ENCODE measurements at regions of chr11 and their contacts with region 1.

Region 1: DNA sequence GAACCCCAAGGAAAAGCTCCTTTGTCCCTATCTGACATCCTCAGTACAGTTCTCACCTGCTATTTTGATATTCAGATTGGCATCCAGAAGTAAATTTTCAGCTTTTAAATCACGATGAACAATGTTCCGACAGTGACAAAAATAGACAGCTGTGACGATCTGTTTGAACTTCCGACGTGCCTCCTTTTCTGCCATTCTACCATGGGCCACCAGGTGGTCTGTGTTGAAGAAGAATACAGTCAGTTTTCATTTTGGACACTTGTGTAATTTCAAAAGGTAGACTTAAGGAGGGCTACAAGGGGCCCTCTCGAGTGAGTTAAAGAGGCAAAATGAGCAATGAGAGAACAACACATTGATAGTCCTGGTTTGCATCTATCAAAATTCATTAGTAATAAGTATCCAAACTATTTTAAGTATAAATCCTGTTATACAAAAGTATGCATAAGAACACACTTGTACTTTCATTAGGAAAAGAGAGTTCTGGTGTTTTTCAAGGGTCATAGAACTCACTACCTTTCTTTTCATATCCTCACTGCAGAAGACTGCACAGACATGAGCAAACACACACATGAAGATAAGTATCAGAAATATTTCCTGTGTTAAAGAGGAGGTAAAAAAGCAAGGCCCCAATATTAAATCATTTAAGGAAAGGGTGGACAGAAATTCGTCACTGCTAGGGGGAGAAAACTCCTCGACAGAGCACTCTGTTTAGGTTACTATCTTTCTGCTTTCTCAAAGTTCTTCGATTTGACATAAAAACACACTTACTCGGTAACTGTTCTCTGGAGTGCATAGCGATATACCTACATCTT is 89.9 kb upstream of the APOA1 start:
- DNase-seq: peak; percentile 52
- H3K4me3 ChIP-seq: no peak overlapping the region
- H3K27ac ChIP-seq: no peak overlapping the region
- H3K4me1 ChIP-seq: peaks cover 31% of the 10 kb centered on the region
- H3K27me3 ChIP-seq: no peaks in the 10 kb centered on the region
- CTCF ChIP-seq: peak; percentile 55

Region 2: GRCh38 chr11:116829525-116830183 is 97.7 kb before region 1 on chr11 and contains the start of gene APOC3:
- CTCF ChIA-PET with region 1: no interaction called
- POLR2A ChIA-PET with region 1: no interaction called
- intact Hi-C with region 1: no loop called
- DNase-seq: peak; percentile 30
- H3K4me3 ChIP-seq: no peak within 1 kb of the TSS
- H3K27ac ChIP-seq: no peak within 1 kb of the TSS
- H3K4me1 ChIP-seq: peaks cover 6% of the 10 kb centered on the region
- H3K27me3 ChIP-seq: no peaks in the 10 kb centered on the region
- CTCF ChIP-seq: no peak
- total RNA-seq, gene APOC3: not detected in 2 replicates

Region 3: DNA sequence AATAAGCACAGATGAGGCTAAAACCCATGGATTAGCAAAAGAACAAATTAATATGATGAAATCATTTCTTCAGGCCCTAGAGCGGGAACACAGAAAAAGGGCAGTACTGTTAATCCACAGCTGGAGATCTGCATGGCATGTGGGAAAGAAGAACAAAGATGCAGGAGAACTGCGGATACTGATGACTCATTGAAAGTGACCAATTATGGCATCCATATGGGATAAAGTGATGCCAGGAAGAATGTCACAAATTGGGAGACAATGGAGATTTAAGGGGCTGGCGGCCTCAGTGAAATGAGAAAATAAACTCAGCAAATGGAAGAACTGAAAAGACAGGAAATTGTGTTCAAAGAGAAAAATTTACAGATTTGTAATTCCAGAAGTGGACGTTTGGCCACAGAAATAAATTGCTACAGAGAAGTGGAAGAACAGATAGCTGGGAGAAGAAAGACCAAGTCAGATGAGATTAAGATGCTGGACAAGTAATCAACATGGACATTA is 131.4 kb after region 1 on chr11:
- CTCF ChIA-PET with region 1: interaction called, 11 read pairs
- POLR2A ChIA-PET with region 1: no interaction called
- intact Hi-C with region 1: no loop called
- DNase-seq: peak; percentile 95
- H3K4me3 ChIP-seq: no peak overlapping the region
- H3K27ac ChIP-seq: peak overlapping the region; percentile 60
- H3K4me1 ChIP-seq: peaks cover 37% of the 10 kb centered on the region
- H3K27me3 ChIP-seq: no peaks in the 10 kb centered on the region
- CTCF ChIP-seq: no peak